ENCODE measurements at regions of chr5 and their contacts with region 1.

Region 1: DNA sequence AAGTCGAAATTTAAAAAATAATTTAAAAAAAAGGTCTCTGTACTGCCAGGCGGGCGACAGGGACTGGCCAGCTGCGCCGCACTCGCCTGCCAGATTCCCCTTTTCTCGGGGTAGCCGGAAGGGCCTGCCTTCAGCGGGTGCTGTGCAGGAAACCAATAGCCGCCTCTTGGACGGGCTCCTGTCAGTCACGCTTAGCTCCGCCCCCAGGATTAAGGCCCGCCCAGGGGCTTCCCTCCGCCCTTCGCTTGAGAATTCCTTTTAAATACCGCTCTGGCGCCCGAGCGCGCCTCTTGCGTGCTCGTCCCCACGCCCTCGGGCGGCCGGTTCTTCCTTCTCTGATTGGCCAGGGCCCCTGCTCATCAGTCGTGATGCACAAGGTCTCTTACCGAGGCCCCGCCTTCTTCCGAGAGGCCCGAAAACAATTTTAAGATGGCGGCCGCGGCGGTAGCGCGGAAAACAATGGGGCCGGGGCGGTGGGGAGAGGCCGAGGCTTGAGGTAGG is at the start of gene MAML1:
- DNase-seq: peak; percentile 99 to 100
- ATAC-seq: peak; percentile 92 to 98 (median 93)
- H3K4me3 ChIP-seq: peak within 1 kb of the TSS; percentile 49
- H3K4me3 Mint-ChIP-seq: peak within 1 kb of the TSS; percentile 89
- H3K27ac ChIP-seq: peak within 1 kb of the TSS; percentile 83
- H3K27ac Mint-ChIP-seq: peak within 1 kb of the TSS; percentile 85 to 91
- H3K4me1 ChIP-seq: peaks cover 33% of the 10 kb centered on the region
- H3K4me1 Mint-ChIP-seq: peaks cover 30 to 35% of the 10 kb centered on the region in 2 donors
- H3K27me3 ChIP-seq: no peaks in the 10 kb centered on the region
- H3K27me3 Mint-ChIP-seq: no peaks in the 10 kb centered on the region
- CTCF ChIP-seq: no peak
- total RNA-seq, gene MAML1: 28.8 to 45.4 (median 37.6) TPM

Region 2: DNA sequence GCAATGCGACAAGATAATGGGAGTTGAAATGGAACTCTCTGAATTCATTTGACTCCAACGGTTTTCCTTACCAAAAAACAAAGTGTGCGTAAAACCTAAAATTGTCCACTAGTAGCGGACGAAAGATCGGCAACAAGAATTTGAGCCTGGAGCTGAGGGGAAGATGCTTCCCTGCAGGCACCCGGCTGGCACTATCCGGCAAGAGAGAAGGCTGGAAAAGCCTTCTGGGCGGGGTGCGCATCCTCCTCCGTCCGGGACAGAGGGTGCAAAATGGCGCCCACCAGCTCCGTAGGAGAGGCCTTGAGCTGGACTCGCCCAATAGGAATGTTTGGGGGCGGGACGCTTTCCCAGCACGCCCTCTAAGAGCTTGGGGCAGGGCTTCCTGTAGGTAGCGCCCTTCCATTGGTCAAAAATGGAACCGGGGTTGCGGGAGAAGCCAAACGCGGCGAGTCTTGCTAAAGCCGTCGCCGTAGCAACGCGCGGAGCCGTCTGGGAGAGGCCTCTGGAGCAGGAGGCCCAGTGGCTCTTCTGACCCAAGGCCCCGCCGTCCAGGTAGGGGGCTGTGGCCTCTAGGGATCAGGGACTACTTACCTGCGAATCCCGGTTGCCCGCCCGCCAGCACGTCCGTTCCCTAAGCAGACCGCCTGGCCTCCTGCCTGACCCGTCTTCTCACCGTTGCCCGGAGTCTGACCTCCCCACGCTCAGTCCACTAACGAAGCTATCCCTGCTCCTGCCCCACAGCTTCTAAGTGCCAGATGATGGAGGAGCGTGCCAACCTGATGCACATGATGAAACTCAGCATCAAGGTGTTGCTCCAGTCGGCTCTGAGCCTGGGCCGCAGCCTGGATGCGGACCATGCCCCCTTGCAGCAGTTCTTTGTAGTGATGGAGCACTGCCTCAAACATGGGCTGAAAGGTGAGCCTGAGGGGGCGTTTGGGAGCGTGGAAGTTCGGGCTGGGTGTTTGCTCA is 172.9 kb before region 1 on chr5:
- intact Hi-C with region 1: loop called (anchors 10 kb)
- DNase-seq: peak; percentile 86 to 94
- ATAC-seq: peak; percentile 99 to 100 (median 100)
- H3K4me3 ChIP-seq: peak overlapping the region; percentile 55
- H3K4me3 Mint-ChIP-seq: peak overlapping the region; percentile 96
- H3K27ac ChIP-seq: peak overlapping the region; percentile 61
- H3K27ac Mint-ChIP-seq: peak overlapping the region; percentile 89 to 95
- H3K4me1 ChIP-seq: peaks cover 9% of the 10 kb centered on the region
- H3K4me1 Mint-ChIP-seq: peaks cover 11% of the 10 kb centered on the region in 2 donors
- H3K27me3 ChIP-seq: no peaks in the 10 kb centered on the region
- H3K27me3 Mint-ChIP-seq: no peaks in the 10 kb centered on the region
- CTCF ChIP-seq: no peak

Region 3: DNA sequence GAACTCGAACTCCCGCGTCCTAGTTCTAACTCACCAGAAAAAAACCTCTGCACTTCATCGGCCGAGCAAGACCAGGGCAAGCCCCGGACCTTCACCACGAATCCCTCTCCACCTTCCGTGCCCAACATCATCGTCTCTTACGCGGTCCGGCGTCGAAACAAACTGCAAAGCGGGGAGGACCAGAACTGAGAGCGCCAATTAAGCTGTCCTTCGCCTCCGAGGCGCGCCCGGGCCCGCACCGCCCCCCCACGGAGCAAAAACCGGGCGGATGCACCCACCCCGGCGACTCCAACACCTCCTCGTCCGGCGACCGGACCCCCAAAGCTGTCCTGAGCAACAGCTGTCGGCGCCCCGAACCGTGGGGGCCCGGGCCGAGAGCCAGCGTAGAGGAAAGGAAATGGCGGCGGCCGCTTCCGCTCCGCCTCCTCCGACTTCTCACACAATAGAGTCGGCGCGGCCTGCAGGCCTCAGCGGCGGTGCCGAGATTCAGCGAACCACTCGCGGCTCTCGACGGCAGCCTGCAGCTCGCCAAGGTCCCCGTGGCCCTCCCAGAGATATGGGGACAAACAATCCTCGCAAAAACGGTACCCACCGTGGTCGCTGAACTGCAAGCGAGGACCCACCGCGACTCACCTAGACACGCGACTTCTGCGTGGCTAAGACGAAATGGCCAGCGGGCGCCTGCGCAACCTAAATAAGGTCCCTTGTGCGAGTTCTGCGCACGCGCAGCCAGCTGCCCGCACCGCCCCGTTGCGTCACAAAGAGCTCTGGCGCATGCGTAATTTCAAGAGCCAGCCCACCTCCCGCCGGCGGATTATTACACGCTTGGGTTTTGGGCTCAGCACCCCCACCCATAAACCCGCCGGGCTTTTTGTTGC is 109.2 kb before region 1 on chr5 and contains the start of gene HNRNPH1:
- intact Hi-C with region 1: loop called (anchors 10 kb)
- DNase-seq: peak; percentile 98 to 99
- ATAC-seq: peak; percentile 71 to 87 (median 77)
- H3K4me3 ChIP-seq: peak within 1 kb of the TSS; percentile 100
- H3K4me3 Mint-ChIP-seq: peak within 1 kb of the TSS; percentile 97
- H3K27ac ChIP-seq: peak within 1 kb of the TSS; percentile 98
- H3K27ac Mint-ChIP-seq: peak within 1 kb of the TSS; percentile 98 to 99
- H3K4me1 ChIP-seq: peaks cover 27% of the 10 kb centered on the region
- H3K4me1 Mint-ChIP-seq: peaks cover 64% of the 10 kb centered on the region in 2 donors
- H3K27me3 ChIP-seq: no peaks in the 10 kb centered on the region
- H3K27me3 Mint-ChIP-seq: no peaks in the 10 kb centered on the region
- CTCF ChIP-seq: no peak
- total RNA-seq, gene HNRNPH1: 1,749 to 2,212 (median 1,853) TPM

Region 4: DNA sequence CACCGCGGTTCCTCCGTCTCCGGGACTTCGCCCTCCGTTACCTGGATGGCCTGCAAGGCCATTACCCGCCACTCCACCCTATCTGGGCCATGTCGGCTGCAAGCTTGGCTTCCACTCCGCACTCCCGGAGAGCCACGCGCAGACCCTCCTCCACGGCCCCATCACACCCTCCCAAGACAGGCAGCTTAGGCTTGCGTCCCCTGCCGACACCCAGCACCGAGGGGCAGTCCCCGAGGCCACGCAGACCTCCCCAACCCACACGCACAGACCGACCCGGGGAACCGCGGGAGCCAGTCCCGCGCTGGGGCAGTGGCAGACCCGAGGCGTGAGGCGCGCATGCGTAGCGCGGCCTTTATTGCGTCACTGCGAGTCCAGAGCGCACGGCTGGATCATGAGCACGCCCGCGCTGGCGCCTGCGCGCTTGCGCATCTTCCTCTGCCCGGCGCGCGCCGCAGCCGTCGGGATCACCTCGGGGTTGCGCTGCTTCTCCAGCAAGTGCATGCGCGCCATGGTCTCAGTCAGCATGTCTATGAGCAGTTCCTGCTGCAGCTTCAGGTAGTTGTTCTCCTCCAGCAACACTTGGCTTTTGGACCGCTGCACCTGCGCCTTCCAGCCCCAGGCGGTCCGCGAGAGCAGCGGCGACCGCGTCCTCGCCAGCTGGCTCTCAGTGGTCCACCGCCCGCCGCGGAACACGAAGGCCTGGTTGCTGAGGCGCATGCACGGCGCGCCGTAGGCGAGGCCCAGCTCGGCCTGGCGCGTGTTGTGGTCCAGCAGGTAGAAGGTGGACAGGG is 54.0 kb before region 1 on chr5:
- intact Hi-C with region 1: loop called (anchors 2 kb)
- DNase-seq: peak; percentile 93 to 99
- ATAC-seq: peak; percentile 90 to 93 (median 90)
- H3K4me3 ChIP-seq: peak overlapping the region; percentile 98
- H3K4me3 Mint-ChIP-seq: peak overlapping the region; percentile 98
- H3K27ac ChIP-seq: peak overlapping the region; percentile 87
- H3K27ac Mint-ChIP-seq: peak overlapping the region; percentile 94 to 100
- H3K4me1 ChIP-seq: peaks cover 29% of the 10 kb centered on the region
- H3K4me1 Mint-ChIP-seq: peaks cover 28 to 30% of the 10 kb centered on the region in 2 donors
- H3K27me3 ChIP-seq: no peaks in the 10 kb centered on the region
- H3K27me3 Mint-ChIP-seq: no peaks in the 10 kb centered on the region
- CTCF ChIP-seq: no peak

Region 5: DNA sequence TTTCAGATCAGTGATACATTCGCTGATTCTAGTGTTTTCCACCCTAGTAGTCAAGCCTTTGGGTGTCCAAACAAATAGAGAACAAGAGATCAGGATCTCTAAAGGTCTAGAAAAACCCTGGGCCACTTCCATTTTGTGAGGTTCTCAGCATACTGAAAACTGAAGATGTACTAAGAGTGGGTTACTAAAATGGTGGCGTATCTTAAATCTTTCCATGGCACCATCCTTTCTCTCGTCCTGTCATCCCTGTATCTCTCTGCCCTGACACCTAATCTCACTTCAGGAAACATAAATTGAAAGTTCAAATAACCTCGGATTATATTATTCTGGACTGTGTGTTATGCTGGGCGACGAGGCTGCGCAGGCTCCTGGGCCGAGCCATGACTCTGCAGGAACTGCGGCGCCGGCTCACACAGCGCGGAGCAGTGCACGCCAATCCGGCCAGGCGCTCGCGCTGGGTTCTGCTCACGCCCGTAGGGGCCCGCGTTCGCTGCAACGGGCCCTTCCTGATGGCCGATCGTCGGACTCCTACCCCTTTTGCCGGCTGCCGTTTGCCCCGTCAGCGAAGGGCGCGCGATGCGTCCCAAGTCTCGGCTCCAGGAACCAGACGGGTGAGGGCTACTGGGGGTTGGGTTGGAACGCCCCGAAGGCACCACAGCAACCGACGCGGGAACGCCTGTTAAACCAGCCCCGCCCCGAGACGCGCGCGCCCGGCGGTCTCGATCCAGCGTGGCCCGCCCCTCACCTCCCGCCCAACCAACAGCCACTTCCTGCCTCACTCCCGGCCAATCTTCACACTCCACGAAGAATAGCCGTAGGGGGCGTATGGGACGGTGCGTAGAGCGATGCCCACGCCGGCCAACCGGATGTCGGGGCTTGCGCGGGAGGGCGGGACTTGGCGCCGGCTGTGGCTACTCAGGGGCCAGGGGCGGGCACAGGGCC is 34.2 kb before region 1 on chr5:
- intact Hi-C with region 1: loop called (anchors 1 kb)
- DNase-seq: peak; percentile 99
- ATAC-seq: peak; percentile 83 to 95 (median 88)
- H3K4me3 ChIP-seq: peak overlapping the region; percentile 65
- H3K4me3 Mint-ChIP-seq: peak overlapping the region; percentile 97
- H3K27ac ChIP-seq: peak overlapping the region; percentile 81
- H3K27ac Mint-ChIP-seq: peak overlapping the region; percentile 94 to 99
- H3K4me1 ChIP-seq: peaks cover 42% of the 10 kb centered on the region
- H3K4me1 Mint-ChIP-seq: peaks cover 45 to 50% of the 10 kb centered on the region in 2 donors
- H3K27me3 ChIP-seq: no peaks in the 10 kb centered on the region
- H3K27me3 Mint-ChIP-seq: no peaks in the 10 kb centered on the region
- CTCF ChIP-seq: no peak

Region 6: DNA sequence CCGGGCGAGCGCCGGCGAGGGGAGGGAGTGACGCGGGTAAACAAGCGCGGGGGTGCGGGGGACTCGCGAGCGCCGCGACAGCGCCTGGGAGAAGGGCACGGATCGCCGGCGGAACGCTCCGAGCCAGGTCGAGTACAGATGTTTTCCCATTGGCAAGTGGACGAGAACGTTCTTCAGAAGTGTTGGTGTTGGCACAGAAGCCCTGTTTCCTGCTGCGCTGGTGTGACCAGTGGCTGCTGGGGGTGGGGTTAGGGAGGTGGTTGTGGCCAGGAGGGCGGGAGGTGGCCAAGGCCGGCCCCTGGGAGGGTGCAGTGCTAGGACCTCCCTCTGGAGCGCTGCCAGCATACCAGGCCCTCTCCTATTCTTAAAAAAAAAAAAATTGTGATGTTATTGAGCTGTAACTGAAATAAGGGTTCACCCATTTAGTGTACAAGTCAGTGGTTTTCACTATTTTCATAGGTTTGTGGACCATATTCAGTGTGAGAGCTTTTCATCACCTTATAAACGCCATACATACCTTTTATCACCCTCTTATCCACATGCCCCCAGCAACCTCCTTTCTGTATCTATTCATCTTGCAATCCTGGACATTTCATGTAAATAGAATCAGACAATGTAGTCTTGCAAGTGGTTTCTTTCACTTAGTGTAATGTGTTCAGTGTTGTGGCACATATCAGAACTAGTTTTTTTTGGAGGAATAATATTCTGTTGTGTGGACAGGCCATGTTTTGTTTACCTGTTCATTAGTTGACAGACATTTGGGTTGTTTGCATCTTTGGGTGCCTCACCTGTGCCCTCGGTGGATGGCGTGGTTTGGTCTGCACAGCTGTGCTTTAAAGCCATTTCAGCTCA is 89.3 kb after region 1 on chr5:
- intact Hi-C with region 1: loop called (anchors 1 kb)
- DNase-seq: peak; percentile 91 to 94
- ATAC-seq: peak; percentile 55 to 82 (median 66)
- H3K4me3 ChIP-seq: peak overlapping the region; percentile 96
- H3K4me3 Mint-ChIP-seq: peak overlapping the region; percentile 96
- H3K27ac ChIP-seq: peak overlapping the region; percentile 100
- H3K27ac Mint-ChIP-seq: peak overlapping the region; percentile 97 to 98
- H3K4me1 ChIP-seq: peaks cover 58% of the 10 kb centered on the region
- H3K4me1 Mint-ChIP-seq: peaks cover 41 to 65% of the 10 kb centered on the region in 2 donors
- H3K27me3 ChIP-seq: no peaks in the 10 kb centered on the region
- H3K27me3 Mint-ChIP-seq: no peaks in the 10 kb centered on the region
- CTCF ChIP-seq: no peak

Region 7: GRCh38 chr5:179994583-179995323 is 262.3 kb after region 1 on chr5:
- intact Hi-C with region 1: no loop called
- DNase-seq: no peak
- ATAC-seq: no peak
- H3K4me3 ChIP-seq: no peak overlapping the region
- H3K4me3 Mint-ChIP-seq: no peak overlapping the region
- H3K27ac ChIP-seq: no peak overlapping the region
- H3K27ac Mint-ChIP-seq: no peak overlapping the region
- H3K4me1 ChIP-seq: peaks cover 8% of the 10 kb centered on the region
- H3K4me1 Mint-ChIP-seq: peaks cover 8 to 9% of the 10 kb centered on the region in 2 donors
- H3K27me3 ChIP-seq: no peaks in the 10 kb centered on the region
- H3K27me3 Mint-ChIP-seq: no peaks in the 10 kb centered on the region
- CTCF ChIP-seq: no peak